Naive thymus-derived CD4-positive, alpha-beta T cell (primary cell): ENCODE measurements at regions of chr1 and their contacts with region 1.

Region 1: DNA sequence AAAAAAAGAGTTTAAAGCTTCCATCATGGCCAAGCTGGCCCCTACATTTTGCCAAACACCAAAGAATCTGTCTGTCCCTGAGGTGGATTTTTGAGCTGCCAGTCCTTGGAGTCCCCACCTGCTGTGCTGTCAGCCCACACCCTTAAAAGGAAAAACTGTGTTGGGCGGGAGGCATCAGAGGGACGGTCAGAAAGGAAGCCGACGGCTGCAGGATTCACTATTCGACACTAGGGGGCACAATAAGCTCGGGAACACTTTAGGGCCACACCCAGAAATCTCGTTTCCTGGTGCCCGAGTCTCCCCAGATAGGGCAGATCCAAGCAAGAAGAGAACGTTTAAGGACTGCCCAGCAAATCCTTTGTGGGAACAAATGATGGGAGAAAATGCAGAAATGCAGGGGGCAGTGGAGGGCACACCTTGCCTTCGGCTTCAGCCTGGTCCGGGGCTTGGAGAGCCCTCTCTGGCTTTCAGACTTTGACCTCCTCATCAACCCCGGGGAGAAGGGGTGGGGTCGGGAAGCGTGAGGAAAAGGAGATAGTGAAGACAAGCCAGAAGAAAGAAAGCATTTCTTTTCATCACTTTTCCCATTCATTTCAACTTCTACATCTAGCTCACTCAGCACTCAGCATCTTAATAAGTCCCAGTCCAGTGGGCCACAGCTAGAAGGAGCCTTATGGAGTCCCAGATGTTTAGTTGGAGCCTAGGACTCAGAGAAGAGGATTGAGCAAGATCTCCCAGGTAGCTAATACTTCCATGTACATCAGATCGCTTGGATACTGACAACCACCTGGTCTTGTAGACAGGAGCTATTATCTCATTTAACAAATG is 5.0 kb upstream of the CTTNBP2NL start:
- DNase-seq: peak; percentile 49 to 78 (median 75)
- ATAC-seq: peak; percentile 90
- H3K4me3 ChIP-seq: no peak overlapping the region
- H3K4me3 Mint-ChIP-seq: peak overlapping the region in 5 of 10 donors; percentile 7 to 78 (median 54)
- H3K27ac ChIP-seq: no peak overlapping the region
- H3K27ac Mint-ChIP-seq: peak overlapping the region in 1 of 9 donors; percentile 62
- H3K4me1 ChIP-seq: peaks cover 7 to 9% of the 10 kb centered on the region in 2 donors
- H3K4me1 Mint-ChIP-seq: peaks cover 7 to 34% (median 15%) of the 10 kb centered on the region in 7 donors
- H3K27me3 ChIP-seq: no peaks in the 10 kb centered on the region
- H3K27me3 Mint-ChIP-seq: peaks cover 9 to 50% (median 39%) of the 10 kb centered on the region in 5 donors

Region 2: DNA sequence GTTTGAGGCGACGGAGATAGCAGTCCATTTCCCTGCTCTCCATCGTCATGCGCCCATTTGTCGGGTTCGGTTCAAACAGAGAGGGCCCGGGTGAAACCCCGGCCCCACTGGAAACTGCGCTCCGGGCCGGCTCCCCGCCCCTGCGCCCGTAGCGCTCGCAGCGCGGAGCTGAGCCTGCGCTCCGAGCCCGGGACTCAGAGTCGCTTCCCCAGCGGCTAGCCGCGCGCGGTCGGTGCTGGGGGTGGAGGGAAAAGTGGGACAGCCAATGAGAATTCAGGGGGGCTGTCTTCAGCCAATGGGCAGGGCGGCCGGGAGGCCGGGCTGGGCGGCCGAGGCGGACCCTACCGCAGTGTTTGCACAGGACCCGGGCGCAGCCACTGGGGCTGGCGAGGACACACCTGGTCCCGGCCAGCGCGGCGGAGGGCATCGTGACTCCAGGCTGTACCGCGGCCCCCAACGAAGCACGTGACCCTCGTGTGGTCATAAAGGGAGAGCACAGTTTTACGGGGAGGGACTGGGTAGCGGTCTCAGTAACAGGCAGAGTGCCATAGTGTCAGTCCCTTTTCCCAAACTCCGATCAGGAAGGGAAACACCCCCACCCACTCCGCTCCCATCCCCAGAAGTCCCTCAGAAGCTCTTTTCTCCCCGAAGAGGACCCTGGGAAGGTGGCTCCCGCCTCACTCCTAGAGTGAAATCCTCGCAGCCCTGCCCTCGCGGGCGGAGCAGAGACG is 651.6 kb before region 1 on chr1 and contains the start of gene INKA2:
- CTCF ChIA-PET with region 1: no interaction called
- POLR2A ChIA-PET with region 1: no interaction called
- intact Hi-C with region 1: no loop called
- DNase-seq: peak in 7 of 9 donors; percentile 22 to 87 (median 33)
- ATAC-seq: peak; percentile 84
- H3K4me3 ChIP-seq: peak within 1 kb of the TSS; percentile 75
- H3K4me3 Mint-ChIP-seq: peak within 1 kb of the TSS; percentile 82 to 95 (median 88)
- H3K27ac ChIP-seq: no peak within 1 kb of the TSS
- H3K27ac Mint-ChIP-seq: peak within 1 kb of the TSS in 6 of 9 donors; percentile 33 to 71 (median 55)
- H3K4me1 ChIP-seq: peaks cover 8 to 10% of the 10 kb centered on the region in 2 donors
- H3K4me1 Mint-ChIP-seq: peaks cover 15 to 21% (median 16%) of the 10 kb centered on the region in 7 donors
- H3K27me3 ChIP-seq: peaks cover 6 to 17% of the 10 kb centered on the region in 2 donors
- H3K27me3 Mint-ChIP-seq: peaks cover 20 to 46% (median 30%) of the 10 kb centered on the region in 5 donors
- total RNA-seq, gene INKA2: 0.94 to 5.6 (median 2.3) TPM in 3 of 5 experiments, not detected in the others

Region 3: GRCh38 chr1:112466078-112466660 is 75.2 kb after region 1 on chr1:
- CTCF ChIA-PET with region 1: interaction called, 75 read pairs
- POLR2A ChIA-PET with region 1: interaction called, 8 read pairs
- intact Hi-C with region 1: loop called (anchors 1 kb)
- DNase-seq: peak; percentile 66 to 85 (median 78)
- ATAC-seq: peak; percentile 94
- H3K4me3 ChIP-seq: peak overlapping the region; percentile 46
- H3K4me3 Mint-ChIP-seq: peak overlapping the region; percentile 71 to 89 (median 84)
- H3K27ac ChIP-seq: peak overlapping the region; percentile 30
- H3K27ac Mint-ChIP-seq: peak overlapping the region in 3 of 9 donors; percentile 43 to 73 (median 64)
- H3K4me1 ChIP-seq: peaks cover 0 to 3% of the 10 kb centered on the region in 2 donors
- H3K4me1 Mint-ChIP-seq: peaks cover 0 to 17% (median 9%) of the 10 kb centered on the region in 7 donors
- H3K27me3 ChIP-seq: no peaks in the 10 kb centered on the region
- H3K27me3 Mint-ChIP-seq: peaks cover 7 to 30% (median 19%) of the 10 kb centered on the region in 5 donors

Region 4: DNA sequence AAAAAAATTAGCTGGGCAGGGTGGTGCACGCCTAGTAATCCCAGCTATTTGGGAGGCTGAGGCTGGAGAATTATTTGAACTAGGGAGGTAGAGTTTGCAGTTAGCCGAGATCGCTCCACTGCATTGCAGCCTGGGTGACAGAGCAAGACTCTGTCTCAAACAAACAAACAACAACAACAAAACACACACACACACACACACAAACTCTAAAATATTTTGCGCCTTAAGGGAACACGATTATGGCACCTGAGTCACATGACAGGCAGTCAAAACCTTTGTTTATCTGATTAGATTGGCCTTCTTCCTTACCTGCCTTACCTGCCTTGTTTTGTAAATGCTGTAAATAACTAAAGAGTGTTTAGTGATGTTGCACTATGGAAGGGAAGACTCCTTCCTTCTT is 97.2 kb after region 1 on chr1:
- CTCF ChIA-PET with region 1: no interaction called
- POLR2A ChIA-PET with region 1: no interaction called
- intact Hi-C with region 1: no loop called
- DNase-seq: no peak
- ATAC-seq: no peak
- H3K4me3 ChIP-seq: no peak overlapping the region
- H3K4me3 Mint-ChIP-seq: no peak overlapping the region
- H3K27ac ChIP-seq: no peak overlapping the region
- H3K27ac Mint-ChIP-seq: no peak overlapping the region
- H3K4me1 ChIP-seq: no peaks in the 10 kb centered on the region
- H3K4me1 Mint-ChIP-seq: no peaks in the 10 kb centered on the region
- H3K27me3 ChIP-seq: no peaks in the 10 kb centered on the region
- H3K27me3 Mint-ChIP-seq: peaks cover 10 to 20% (median 12%) of the 10 kb centered on the region in 5 donors

Region 5: GRCh38 chr1:112614460-112615065 is 223.6 kb after region 1 on chr1:
- CTCF ChIA-PET with region 1: interaction called, 5 read pairs
- POLR2A ChIA-PET with region 1: interaction called, 4 read pairs
- intact Hi-C with region 1: loop called (anchors 1 kb)
- DNase-seq: peak in 5 of 9 donors; percentile 9 to 46 (median 33)
- ATAC-seq: no peak
- H3K4me3 ChIP-seq: no peak overlapping the region
- H3K4me3 Mint-ChIP-seq: peak overlapping the region in 1 of 10 donors; percentile 30
- H3K27ac ChIP-seq: no peak overlapping the region
- H3K27ac Mint-ChIP-seq: peak overlapping the region in 4 of 9 donors; percentile 49 to 87 (median 68)
- H3K4me1 ChIP-seq: peaks cover 8 to 11% of the 10 kb centered on the region in 2 donors
- H3K4me1 Mint-ChIP-seq: peaks cover 10 to 35% (median 14%) of the 10 kb centered on the region in 7 donors
- H3K27me3 ChIP-seq: no peaks in the 10 kb centered on the region
- H3K27me3 Mint-ChIP-seq: peaks cover 0 to 1% (median 0%) of the 10 kb centered on the region in 5 donors

Region 6: GRCh38 chr1:112674439-112674985 is 283.5 kb after region 1 on chr1 and contains the start of gene MOV10:
- CTCF ChIA-PET with region 1: no interaction called
- POLR2A ChIA-PET with region 1: no interaction called
- intact Hi-C with region 1: loop called in 1 of 2 experiments (anchors 10 kb)
- DNase-seq: peak; percentile 38 to 62 (median 59)
- ATAC-seq: peak; percentile 73
- H3K4me3 ChIP-seq: peak within 1 kb of the TSS; percentile 92
- H3K4me3 Mint-ChIP-seq: peak within 1 kb of the TSS; percentile 94 to 99 (median 97)
- H3K27ac ChIP-seq: peak within 1 kb of the TSS; percentile 88
- H3K27ac Mint-ChIP-seq: peak within 1 kb of the TSS; percentile 90 to 98 (median 95)
- H3K4me1 ChIP-seq: peaks cover 17 to 19% of the 10 kb centered on the region in 2 donors
- H3K4me1 Mint-ChIP-seq: peaks cover 37 to 62% (median 58%) of the 10 kb centered on the region in 7 donors
- H3K27me3 ChIP-seq: no peaks in the 10 kb centered on the region
- H3K27me3 Mint-ChIP-seq: no peaks in the 10 kb centered on the region
- total RNA-seq, gene MOV10: 85.5 to 126 (median 90.1) TPM

Region 7: GRCh38 chr1:112706908-112707663 is 316.1 kb after region 1 on chr1 and contains the start of gene RHOC:
- CTCF ChIA-PET with region 1: interaction called, 15 read pairs
- POLR2A ChIA-PET with region 1: no interaction called
- intact Hi-C with region 1: loop called (anchors 1 kb)
- DNase-seq: peak in 6 of 9 donors; percentile 27 to 79 (median 44)
- ATAC-seq: peak; percentile 75
- H3K4me3 ChIP-seq: peak within 1 kb of the TSS; percentile 41
- H3K4me3 Mint-ChIP-seq: peak within 1 kb of the TSS; percentile 74 to 90 (median 83)
- H3K27ac ChIP-seq: no peak within 1 kb of the TSS
- H3K27ac Mint-ChIP-seq: peak within 1 kb of the TSS; percentile 13 to 87 (median 73)
- H3K4me1 ChIP-seq: peaks cover 22% of the 10 kb centered on the region in 2 donors
- H3K4me1 Mint-ChIP-seq: peaks cover 15 to 52% (median 45%) of the 10 kb centered on the region in 7 donors
- H3K27me3 ChIP-seq: no peaks in the 10 kb centered on the region
- H3K27me3 Mint-ChIP-seq: peaks cover 0 to 27% (median 0%) of the 10 kb centered on the region in 5 donors
- total RNA-seq, gene RHOC: 0.57 to 89.1 (median 18.7) TPM

Region 8: GRCh38 chr1:112803906-112804762 is 413.1 kb after region 1 on chr1:
- CTCF ChIA-PET with region 1: interaction called, 5 read pairs
- POLR2A ChIA-PET with region 1: no interaction called
- intact Hi-C with region 1: loop called in 1 of 2 experiments (anchors 2 kb)
- DNase-seq: peak in 7 of 9 donors; percentile 5 to 56 (median 20)
- ATAC-seq: peak; percentile 80
- H3K4me3 ChIP-seq: no peak overlapping the region
- H3K4me3 Mint-ChIP-seq: no peak overlapping the region
- H3K27ac ChIP-seq: no peak overlapping the region
- H3K27ac Mint-ChIP-seq: peak overlapping the region in 1 of 9 donors; percentile 15
- H3K4me1 ChIP-seq: no peaks in the 10 kb centered on the region
- H3K4me1 Mint-ChIP-seq: no peaks in the 10 kb centered on the region
- H3K27me3 ChIP-seq: no peaks in the 10 kb centered on the region
- H3K27me3 Mint-ChIP-seq: peaks cover 0 to 18% (median 0%) of the 10 kb centered on the region in 5 donors

Region 9: GRCh38 chr1:113677250-113678158 is 1286.5 kb after region 1 on chr1:
- CTCF ChIA-PET with region 1: no interaction called
- POLR2A ChIA-PET with region 1: no interaction called
- intact Hi-C with region 1: loop called in 1 of 2 experiments (anchors 5 kb)
- DNase-seq: peak in 5 of 9 donors; percentile 23 to 49 (median 39)
- ATAC-seq: peak; percentile 60
- H3K4me3 ChIP-seq: no peak overlapping the region
- H3K4me3 Mint-ChIP-seq: no peak overlapping the region
- H3K27ac ChIP-seq: no peak overlapping the region
- H3K27ac Mint-ChIP-seq: no peak overlapping the region
- H3K4me1 ChIP-seq: no peaks in the 10 kb centered on the region
- H3K4me1 Mint-ChIP-seq: peaks cover 0 to 10% (median 0%) of the 10 kb centered on the region in 7 donors
- H3K27me3 ChIP-seq: no peaks in the 10 kb centered on the region
- H3K27me3 Mint-ChIP-seq: no peaks in the 10 kb centered on the region